Calu3 (cell line): ENCODE measurements at regions of chr2 and their contacts with region 1.

Region 1: DNA sequence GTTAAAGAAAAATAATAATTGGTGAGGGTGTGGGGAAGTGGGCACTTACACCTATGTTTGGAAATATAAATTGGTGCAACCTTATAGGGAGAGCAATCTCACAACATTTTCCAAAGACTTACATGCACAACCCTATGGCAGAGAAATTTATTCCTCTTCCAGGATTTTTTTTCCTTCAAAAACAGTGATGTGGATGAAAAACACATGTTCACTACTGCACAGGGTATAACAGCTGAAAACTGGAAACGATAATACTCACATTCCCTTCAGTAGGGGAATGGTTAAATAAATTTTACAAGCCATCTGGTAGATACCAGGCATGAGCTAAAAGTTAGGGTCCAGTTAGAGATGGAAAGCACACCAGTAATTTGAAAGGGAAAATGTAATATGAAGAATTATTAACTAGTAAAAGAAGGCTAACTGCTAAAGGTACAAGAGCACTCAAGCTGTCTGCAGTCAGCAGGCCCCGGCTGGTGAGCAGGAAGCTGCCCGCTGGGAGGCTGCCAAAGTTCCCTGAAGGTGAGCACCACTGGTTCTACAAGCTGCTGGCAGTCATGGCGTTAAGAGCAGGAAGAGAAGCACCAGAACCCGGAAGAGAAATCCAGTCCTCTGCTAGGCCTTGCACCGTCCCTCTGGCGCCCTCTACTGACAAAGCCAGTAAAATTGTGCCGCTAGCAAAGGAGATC is 28.4 kb upstream of the CASP8 start:
- DNase-seq: peak; percentile 96
- H3K4me3 Mint-ChIP-seq: peak overlapping the region; percentile 93
- H3K27ac Mint-ChIP-seq: peak overlapping the region; percentile 77
- H3K4me1 Mint-ChIP-seq: peaks cover 33% of the 10 kb centered on the region
- H3K27me3 Mint-ChIP-seq: no peaks in the 10 kb centered on the region
- CTCF ChIP-seq: peak; percentile 90

Region 2: GRCh38 chr2:200901459-200902072 is 330.4 kb before region 1 on chr2:
- CTCF ChIA-PET with region 1: interaction called, 18 read pairs
- intact Hi-C with region 1: loop called (anchors 5 kb)
- DNase-seq: peak; percentile 75
- H3K4me3 Mint-ChIP-seq: no peak overlapping the region
- H3K27ac Mint-ChIP-seq: no peak overlapping the region
- H3K4me1 Mint-ChIP-seq: peaks cover 8% of the 10 kb centered on the region
- H3K27me3 Mint-ChIP-seq: no peaks in the 10 kb centered on the region
- CTCF ChIP-seq: peak; percentile 85

Region 3: DNA sequence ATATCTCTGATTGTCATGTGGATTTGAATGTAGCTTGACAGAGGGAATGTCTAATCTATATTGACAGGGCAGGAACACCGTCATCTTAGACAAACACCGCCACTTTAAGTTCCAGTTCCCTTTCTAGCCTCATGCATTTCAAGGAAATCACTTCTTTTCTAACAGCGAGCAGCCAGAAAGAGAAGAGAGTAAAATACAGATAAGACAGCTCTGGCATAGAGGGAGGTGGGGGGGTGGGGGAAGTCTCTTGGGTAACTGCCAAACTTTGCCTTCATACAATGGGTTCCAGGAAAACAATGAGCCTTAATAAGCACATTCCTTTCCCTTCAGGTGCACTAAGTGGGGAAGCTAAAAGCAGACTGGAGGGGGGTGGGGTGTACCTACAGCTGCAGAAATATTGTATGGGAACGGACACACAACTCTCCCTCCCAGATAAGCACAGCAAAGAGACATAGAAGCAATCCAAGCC is 11.8 kb before region 1 on chr2:
- CTCF ChIA-PET with region 1: interaction called, 25 read pairs
- intact Hi-C with region 1: no loop called
- DNase-seq: peak; percentile 32
- H3K4me3 Mint-ChIP-seq: no peak overlapping the region
- H3K27ac Mint-ChIP-seq: peak overlapping the region; percentile 67
- H3K4me1 Mint-ChIP-seq: peaks cover 22% of the 10 kb centered on the region
- H3K27me3 Mint-ChIP-seq: no peaks in the 10 kb centered on the region
- CTCF ChIP-seq: no peak

Region 4: DNA sequence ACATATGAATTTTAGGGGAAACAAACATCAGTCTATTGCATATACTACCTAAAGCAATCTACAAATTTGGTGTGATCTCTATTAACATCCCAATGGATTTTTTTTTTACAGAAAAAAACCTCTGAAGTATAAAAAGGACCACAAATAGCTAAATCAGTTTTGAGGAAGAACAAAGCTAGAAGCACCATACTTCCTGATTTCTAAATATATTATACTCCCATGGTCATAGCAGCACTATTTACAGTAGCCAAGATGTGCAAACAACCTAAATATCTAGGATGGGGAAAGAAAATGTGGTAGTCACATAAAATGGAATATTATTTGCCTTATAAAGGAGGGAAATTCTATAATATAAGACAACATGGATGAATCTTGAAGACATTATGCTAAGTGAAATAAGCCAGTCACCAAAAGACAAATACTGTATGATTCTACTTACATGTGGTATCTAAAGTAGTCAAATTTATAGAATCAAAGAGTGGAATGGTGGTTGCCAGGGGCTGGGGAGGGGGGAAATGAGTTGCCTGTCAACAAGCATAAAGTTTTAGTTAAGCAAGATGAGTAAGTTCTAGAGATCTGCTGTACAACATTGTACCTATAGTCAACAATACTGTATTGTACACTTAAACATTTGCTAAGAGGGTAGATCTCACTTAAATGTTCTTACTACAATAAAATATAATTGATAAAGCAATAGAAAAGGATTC is 10.8 kb after region 1 on chr2:
- CTCF ChIA-PET with region 1: no interaction called
- intact Hi-C with region 1: no loop called
- DNase-seq: no peak
- H3K4me3 Mint-ChIP-seq: no peak overlapping the region
- H3K27ac Mint-ChIP-seq: no peak overlapping the region
- H3K4me1 Mint-ChIP-seq: peaks cover 7% of the 10 kb centered on the region
- H3K27me3 Mint-ChIP-seq: no peaks in the 10 kb centered on the region
- CTCF ChIP-seq: no peak

Region 5: DNA sequence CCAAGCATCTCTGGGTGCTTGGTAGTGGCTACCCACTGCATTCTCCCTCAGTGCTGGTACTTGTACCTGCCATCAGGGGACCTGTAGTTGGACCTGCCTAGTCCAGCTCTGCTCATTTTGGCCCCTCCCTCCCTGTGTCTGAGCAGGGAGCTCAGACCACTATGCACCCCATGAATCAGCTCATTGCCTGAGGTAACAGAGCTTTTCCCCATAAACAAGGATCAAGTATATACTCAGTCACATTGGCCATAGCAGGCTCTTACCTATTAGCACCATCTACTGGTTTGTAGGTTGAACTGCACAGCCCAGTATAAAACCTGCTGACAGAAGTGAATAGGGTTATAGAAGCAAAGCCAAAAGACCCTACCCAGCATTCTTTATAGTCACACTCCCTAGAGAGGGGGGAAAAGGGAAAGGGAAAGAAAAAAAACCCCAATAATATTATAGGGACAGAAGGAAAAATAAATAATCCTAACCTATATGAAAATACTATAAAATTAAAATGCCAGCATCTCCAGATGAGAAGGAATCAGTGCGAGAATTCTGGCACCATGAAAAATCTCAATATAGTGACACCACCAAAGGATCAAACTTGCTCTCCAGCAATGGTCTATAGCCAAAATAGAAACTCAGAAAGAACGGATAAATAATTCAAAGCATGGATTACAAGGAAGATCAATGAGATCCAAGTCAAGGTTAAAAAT is 132.1 kb after region 1 on chr2:
- CTCF ChIA-PET with region 1: interaction called, 15 read pairs
- intact Hi-C with region 1: loop called (anchors 1 kb)
- DNase-seq: peak; percentile 40
- H3K4me3 Mint-ChIP-seq: no peak overlapping the region
- H3K27ac Mint-ChIP-seq: no peak overlapping the region
- H3K4me1 Mint-ChIP-seq: peaks cover 6% of the 10 kb centered on the region
- H3K27me3 Mint-ChIP-seq: no peaks in the 10 kb centered on the region
- CTCF ChIP-seq: peak; percentile 80